Psoas muscle (tissue), 8 donors: ENCODE measurements at regions of chr20 and their contacts with region 1.

Region 1: DNA sequence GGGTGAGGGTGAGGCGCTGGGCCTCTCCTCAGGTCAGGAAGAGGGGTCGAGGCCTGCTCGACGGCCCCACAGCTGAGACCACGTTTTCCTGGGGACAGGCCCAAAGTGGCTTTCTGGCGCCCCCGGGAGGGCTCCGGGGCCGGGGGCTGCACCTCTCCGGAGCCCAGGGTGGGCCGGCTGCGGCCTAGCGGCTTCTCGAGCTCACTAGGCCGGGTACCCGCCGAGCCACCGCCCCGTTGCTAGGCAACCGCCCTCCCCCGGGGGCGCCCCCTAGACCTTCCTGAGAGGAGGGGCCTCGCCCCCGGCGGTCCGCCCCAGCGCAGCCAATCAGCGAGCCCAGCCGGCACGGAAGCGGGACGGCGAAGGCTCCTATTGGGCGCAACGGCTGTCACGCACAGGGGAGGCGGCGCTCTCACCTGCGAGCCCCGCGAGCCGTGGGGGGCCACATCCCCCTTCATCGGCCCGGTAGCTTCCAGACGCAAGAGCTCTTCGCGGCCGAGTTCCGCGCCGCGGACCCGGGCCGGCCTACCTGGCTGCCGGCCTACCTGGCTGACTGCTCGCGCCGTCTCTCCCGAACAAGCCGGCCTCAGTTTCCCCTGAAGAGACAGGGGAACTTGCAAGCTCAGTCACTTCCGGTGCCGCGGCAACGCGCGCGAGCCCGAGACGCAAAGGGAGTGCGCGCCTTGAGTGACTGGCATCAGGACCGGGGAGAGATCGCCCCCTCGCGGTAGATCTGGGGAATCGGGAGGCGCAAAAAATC is 831 bp upstream of the BCL2L1 start:
- DNase-seq: peak; percentile 99
- ATAC-seq: peak; percentile 92 to 94 (median 93)
- H3K4me3 ChIP-seq: peak overlapping the region; percentile 85
- H3K27ac ChIP-seq: peak overlapping the region; percentile 98
- H3K4me1 ChIP-seq: peaks cover 21% of the 10 kb centered on the region
- H3K27me3 ChIP-seq: no peaks in the 10 kb centered on the region
- CTCF ChIP-seq: peak; percentile 96

Region 2: DNA sequence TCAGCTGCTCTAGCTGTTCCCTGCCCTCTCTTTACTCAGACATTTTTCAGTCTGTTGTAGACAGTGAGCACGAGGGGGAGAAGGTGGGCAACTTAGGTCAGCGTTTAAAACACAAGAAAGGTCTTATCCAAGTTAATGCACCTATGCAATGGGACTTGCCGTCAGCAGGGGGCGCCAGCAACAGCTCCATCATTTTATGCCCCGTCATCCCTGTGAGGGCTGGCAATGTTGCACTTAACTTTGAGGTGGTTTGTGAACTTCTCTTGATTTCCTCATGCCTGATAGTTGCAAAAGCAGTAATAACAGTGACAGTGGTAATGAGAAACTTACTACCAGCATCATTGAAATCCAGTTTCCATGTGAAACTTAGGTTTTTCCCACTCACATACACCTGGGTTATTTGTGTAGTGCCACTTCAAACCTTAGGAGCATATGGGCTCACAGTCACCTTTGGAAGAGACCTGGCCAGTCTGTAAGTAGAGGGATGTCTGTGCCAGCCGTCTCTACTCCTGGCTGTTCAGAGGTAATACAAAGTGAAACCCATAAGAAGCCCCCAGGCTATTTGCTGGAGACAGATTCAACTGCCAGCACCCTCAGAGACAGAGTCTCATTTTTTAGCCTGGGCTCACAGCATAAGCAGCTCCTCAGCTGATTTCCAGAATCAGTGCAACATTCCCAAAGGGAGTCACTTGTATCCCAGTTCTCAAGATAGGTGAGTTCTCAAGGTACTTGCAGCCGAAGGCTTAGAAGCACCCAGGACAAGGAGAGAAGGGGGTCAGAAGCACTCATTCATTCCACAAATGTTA is 163.2 kb before region 1 on chr20:
- intact Hi-C with region 1: loop called in 1 of 2 experiments (anchors 10 kb)
- DNase-seq: peak; percentile 81 to 85
- ATAC-seq: peak; percentile 39 to 68 (median 60)
- H3K4me3 ChIP-seq: no peak overlapping the region
- H3K27ac ChIP-seq: peak overlapping the region; percentile 83
- H3K4me1 ChIP-seq: peaks cover 32% of the 10 kb centered on the region
- H3K27me3 ChIP-seq: no peaks in the 10 kb centered on the region
- CTCF ChIP-seq: peak; percentile 80

Region 3: GRCh38 chr20:31661625-31662371 is 61.7 kb before region 1 on chr20:
- intact Hi-C with region 1: loop called (anchors 1 kb)
- DNase-seq: peak; percentile 84 to 90
- ATAC-seq: peak; percentile 84 to 90 (median 84)
- H3K4me3 ChIP-seq: peak overlapping the region; percentile 49
- H3K27ac ChIP-seq: peak overlapping the region; percentile 52
- H3K4me1 ChIP-seq: peaks cover 13% of the 10 kb centered on the region
- H3K27me3 ChIP-seq: no peaks in the 10 kb centered on the region
- CTCF ChIP-seq: peak; percentile 89

Region 4: GRCh38 chr20:31712564-31713311 is 10.8 kb before region 1 on chr20:
- intact Hi-C with region 1: loop called in 1 of 2 experiments (anchors 2 kb)
- DNase-seq: peak; percentile 87 to 90
- ATAC-seq: peak; percentile 48 to 84 (median 80)
- H3K4me3 ChIP-seq: peak overlapping the region; percentile 53
- H3K27ac ChIP-seq: peak overlapping the region; percentile 85
- H3K4me1 ChIP-seq: peaks cover 94% of the 10 kb centered on the region
- H3K27me3 ChIP-seq: no peaks in the 10 kb centered on the region
- CTCF ChIP-seq: no peak

Region 5: DNA sequence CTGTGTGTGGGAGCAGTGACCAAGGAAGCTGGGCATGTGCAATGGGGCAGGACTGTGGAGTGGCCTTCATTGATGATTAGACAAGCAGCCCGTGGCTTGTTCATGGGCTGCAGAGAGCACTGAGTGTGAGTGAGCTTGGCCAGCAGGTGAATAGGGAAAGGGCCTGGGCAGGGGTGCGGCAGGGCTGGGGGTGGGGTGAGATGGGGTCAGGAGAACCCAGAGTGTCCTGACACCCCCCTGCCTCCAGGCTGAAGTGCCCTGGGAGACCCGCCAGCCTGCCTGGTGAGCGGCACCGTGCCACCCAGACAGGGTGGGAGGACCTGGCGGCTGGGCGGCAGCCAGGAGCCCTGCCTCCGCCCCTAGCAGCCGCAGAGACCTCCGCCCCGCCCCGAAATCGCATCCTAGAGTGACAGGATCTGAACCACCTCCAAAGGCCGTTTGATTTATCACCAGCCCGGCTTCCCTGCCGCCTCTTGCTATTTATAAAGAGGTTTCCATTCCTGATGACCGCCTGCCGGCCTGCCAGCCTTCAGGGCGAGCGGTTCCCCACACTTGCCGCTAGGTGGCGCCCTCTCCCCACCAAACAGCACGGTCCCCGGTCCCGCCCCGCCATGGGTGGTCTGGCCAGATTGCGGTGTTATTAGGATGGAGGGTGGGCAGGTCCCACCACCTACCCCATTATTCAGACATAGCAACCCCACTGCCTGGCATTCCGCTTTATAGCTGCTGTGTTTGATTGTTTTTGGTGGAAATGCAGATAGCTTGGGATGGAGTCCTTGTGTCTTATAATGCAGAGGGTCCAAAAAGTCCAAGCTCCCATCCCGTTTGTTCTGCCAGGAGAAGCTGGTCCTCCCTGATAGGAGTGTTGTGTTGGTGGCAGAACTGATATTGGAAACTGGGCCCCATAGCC is 99.2 kb after region 1 on chr20:
- intact Hi-C with region 1: loop called (anchors 5 kb)
- DNase-seq: peak; percentile 85 to 93
- ATAC-seq: peak; percentile 76 to 82 (median 79)
- H3K4me3 ChIP-seq: peak overlapping the region; percentile 78
- H3K27ac ChIP-seq: peak overlapping the region; percentile 80
- H3K4me1 ChIP-seq: peaks cover 42% of the 10 kb centered on the region
- H3K27me3 ChIP-seq: no peaks in the 10 kb centered on the region
- CTCF ChIP-seq: peak; percentile 100

Region 6: GRCh38 chr20:31835977-31836852 is 112.7 kb after region 1 on chr20:
- intact Hi-C with region 1: loop called in 1 of 2 experiments (anchors 5 kb)
- DNase-seq: peak; percentile 90 to 94
- ATAC-seq: peak; percentile 81 to 93 (median 87)
- H3K4me3 ChIP-seq: no peak overlapping the region
- H3K27ac ChIP-seq: peak overlapping the region; percentile 67
- H3K4me1 ChIP-seq: peaks cover 31% of the 10 kb centered on the region
- H3K27me3 ChIP-seq: no peaks in the 10 kb centered on the region
- CTCF ChIP-seq: no peak

Region 7: GRCh38 chr20:32031007-32031958 is 307.8 kb after region 1 on chr20:
- intact Hi-C with region 1: loop called in 1 of 2 experiments (anchors 10 kb)
- DNase-seq: peak; percentile 77 to 87
- ATAC-seq: peak; percentile 84 to 94 (median 87)
- H3K4me3 ChIP-seq: peak overlapping the region; percentile 50
- H3K27ac ChIP-seq: no peak overlapping the region
- H3K4me1 ChIP-seq: no peaks in the 10 kb centered on the region
- H3K27me3 ChIP-seq: peaks cover 0 to 32% (median under 1%) of the 10 kb centered on the region in 3 donors
- CTCF ChIP-seq: peak; percentile 93

Region 8: GRCh38 chr20:32116079-32116521 is 392.6 kb after region 1 on chr20:
- intact Hi-C with region 1: no loop called
- DNase-seq: no peak
- ATAC-seq: peak; percentile 82 to 87 (median 86)
- H3K4me3 ChIP-seq: peak overlapping the region; percentile 24
- H3K27ac ChIP-seq: peak overlapping the region; percentile 69
- H3K4me1 ChIP-seq: peaks cover 45% of the 10 kb centered on the region
- H3K27me3 ChIP-seq: no peaks in the 10 kb centered on the region
- CTCF ChIP-seq: no peak